PC-3 (cell line): ENCODE measurements at regions of chr15 and their contacts with region 1.

Region 1: DNA sequence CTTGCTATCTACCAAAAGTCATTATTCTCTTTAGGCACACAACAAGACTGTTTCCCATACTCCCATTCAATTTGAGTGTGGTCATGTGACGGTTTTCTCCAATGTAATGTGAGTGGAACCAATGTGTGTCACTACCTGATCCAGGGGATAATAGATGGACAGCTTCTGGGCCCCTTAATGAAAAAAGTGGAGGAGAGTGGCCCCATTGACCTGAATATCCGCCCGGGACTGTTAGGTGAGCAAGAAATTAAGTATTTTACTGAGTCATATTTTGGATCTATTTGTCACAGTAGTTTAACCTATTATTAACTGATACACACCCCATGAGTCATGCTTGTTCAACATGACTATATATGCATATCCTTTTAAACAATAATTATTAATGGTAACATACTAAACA is 15.1 kb upstream of the ARID3B start:
- DNase-seq: peak; percentile 96
- ATAC-seq: peak; percentile 73
- H3K4me3 ChIP-seq: no peak overlapping the region
- H3K27ac ChIP-seq: peak overlapping the region; percentile 96
- H3K4me1 ChIP-seq: peaks cover 54% of the 10 kb centered on the region
- H3K27me3 ChIP-seq: no peaks in the 10 kb centered on the region
- CTCF ChIP-seq: no peak

Region 2: DNA sequence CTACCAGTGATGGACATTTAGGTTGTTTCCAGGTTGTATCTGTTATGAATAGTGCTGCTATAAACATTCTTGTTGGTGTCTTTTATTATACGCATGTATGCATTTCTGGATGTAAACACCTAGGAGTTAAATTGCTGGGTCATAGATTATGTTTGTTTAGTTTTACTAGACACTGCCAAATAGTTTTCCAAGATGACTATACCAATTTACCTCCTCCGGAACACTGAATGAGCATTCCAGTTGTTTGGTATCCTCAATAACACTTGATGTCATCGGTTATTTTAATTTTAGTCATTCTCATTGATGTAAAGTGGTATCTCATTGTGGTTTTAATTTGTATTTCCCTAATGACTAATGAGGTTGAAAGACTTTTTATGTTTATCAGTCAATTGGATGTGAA is 21.5 kb before region 1 on chr15:
- CTCF ChIA-PET with region 1: no interaction called
- POLR2A ChIA-PET with region 1: interaction called, 3 read pairs
- intact Hi-C with region 1: loop called (anchors 1 kb)
- DNase-seq: peak; percentile 83
- ATAC-seq: peak; percentile 87
- H3K4me3 ChIP-seq: no peak overlapping the region
- H3K27ac ChIP-seq: peak overlapping the region; percentile 89
- H3K4me1 ChIP-seq: peaks cover 28% of the 10 kb centered on the region
- H3K27me3 ChIP-seq: no peaks in the 10 kb centered on the region
- CTCF ChIP-seq: no peak